ENCODE measurements at regions of chr1 and their contacts with region 1.

Region 1: DNA sequence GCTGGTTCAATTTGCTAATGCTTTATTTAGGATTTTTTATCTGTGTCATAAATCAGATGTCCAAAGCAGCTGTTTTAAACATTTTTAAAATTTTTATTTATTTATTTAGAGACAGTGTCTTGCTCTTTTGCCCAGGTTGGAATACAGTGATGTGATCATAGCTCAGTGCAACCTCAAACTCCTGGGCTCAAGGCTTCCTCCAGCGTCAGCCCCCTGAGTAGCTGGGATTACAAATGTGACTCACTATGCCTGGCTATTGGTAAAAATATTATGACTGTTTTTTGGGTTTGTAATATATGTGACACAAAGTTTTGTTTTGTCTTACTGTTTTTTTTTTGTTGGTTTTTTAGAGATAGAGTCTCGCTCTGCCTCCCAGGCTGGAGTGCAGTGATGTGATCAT is 11.8 kb downstream of the ZBED6 start:
- DNase-seq: no peak
- H3K4me3 ChIP-seq: no peak overlapping the region
- H3K27ac ChIP-seq: no peak overlapping the region
- H3K4me1 ChIP-seq: no peaks in the 10 kb centered on the region
- H3K27me3 ChIP-seq: no peaks in the 10 kb centered on the region
- CTCF ChIP-seq: no peak

Region 2: DNA sequence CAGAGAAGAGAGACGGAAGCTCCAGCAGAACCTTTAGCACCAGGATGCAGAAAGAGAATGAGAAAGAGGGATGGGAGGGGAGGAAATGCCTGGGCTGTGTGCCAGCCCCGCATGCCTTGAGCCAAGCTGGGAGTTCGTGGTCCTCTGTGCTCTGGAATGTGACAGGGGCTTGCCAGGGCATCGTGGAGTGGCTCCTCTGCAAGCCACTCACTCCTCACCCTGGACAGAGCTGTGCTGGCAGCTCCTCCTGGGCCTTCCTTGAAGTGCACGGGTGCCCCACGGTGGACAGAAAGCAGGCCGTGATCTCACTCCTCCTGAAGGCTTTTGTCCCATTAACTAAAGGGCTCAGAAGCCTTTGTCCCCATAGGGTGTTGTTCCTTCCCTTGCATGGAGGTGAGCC is 366.4 kb before region 1 on chr1:
- CTCF ChIA-PET with region 1: no interaction called
- POLR2A ChIA-PET with region 1: no interaction called
- intact Hi-C with region 1: no loop called
- DNase-seq: peak in 1 of 2 experiments; percentile 20
- H3K4me3 ChIP-seq: no peak overlapping the region
- H3K27ac ChIP-seq: no peak overlapping the region
- H3K4me1 ChIP-seq: no peaks in the 10 kb centered on the region
- H3K27me3 ChIP-seq: peaks cover 93% of the 10 kb centered on the region
- CTCF ChIP-seq: 0 out of 2 replicates have a peak, but pooled peaks have one; percentile 21

Region 3: GRCh38 chr1:203744075-203744972 is 62.9 kb before region 1 on chr1:
- CTCF ChIA-PET with region 1: no interaction called
- POLR2A ChIA-PET with region 1: interaction called, 13 read pairs
- intact Hi-C with region 1: no loop called
- DNase-seq: no peak
- H3K4me3 ChIP-seq: no peak overlapping the region
- H3K27ac ChIP-seq: no peak overlapping the region
- H3K4me1 ChIP-seq: no peaks in the 10 kb centered on the region
- H3K27me3 ChIP-seq: no peaks in the 10 kb centered on the region
- CTCF ChIP-seq: no peak

Region 4: DNA sequence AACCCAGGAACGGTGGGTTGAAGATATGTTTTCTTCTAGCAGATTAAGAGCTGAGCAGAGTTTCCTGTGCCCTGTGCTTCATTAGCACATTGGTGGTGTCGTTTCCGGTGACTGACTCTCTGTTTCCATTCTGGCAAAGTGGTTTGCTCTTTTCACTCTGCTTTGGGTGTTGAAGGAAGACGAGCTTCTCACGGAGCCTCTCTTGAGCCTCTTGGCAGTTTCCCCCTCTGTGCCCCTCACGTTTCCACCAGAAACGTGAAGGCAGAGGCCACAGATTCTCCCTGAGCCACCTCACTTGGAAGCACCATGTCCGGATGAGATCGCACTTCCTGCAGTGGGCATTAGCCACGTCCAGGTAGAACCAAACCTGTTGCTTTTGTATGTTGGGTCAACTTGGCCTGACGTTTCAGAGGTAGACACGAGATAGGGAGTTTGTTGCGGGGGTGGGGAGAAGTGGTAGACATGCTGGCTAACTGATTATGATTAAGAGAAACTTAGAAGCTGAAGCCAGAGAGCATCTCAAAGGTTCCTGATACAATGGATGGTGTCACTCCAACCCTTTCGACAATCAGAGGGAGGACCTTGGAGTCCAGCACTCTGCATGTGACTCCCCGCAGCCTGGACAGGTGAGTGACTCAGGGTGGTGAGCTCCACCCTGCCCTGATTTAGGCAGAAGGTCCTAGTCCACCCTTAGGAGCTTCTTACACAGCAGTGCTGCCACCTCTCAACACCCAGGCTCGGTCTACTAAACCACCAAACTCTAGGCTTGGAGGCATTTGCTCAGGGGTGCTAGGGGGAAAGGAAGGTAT is 42.0 kb before region 1 on chr1 and contains the start of gene LAX1:
- CTCF ChIA-PET with region 1: no interaction called
- POLR2A ChIA-PET with region 1: no interaction called
- intact Hi-C with region 1: no loop called
- DNase-seq: no peak
- H3K4me3 ChIP-seq: no peak within 1 kb of the TSS
- H3K27ac ChIP-seq: no peak within 1 kb of the TSS
- H3K4me1 ChIP-seq: peaks cover 8% of the 10 kb centered on the region
- H3K27me3 ChIP-seq: no peaks in the 10 kb centered on the region
- CTCF ChIP-seq: no peak
- total RNA-seq, gene LAX1: not detected in 2 replicates

Region 5: GRCh38 chr1:203795441-203796235 is 11.6 kb before region 1 on chr1 and contains the starts of genes ZBED6 and ZC3H11A:
- CTCF ChIA-PET with region 1: no interaction called
- POLR2A ChIA-PET with region 1: no interaction called
- intact Hi-C with region 1: no loop called
- DNase-seq: peak; percentile 96 to 98
- H3K4me3 ChIP-seq: peak within 1 kb of the TSS; percentile 70
- H3K27ac ChIP-seq: peak within 1 kb of the TSS; percentile 91
- H3K4me1 ChIP-seq: peaks cover 22% of the 10 kb centered on the region
- H3K27me3 ChIP-seq: no peaks in the 10 kb centered on the region
- CTCF ChIP-seq: no peak
- total RNA-seq, gene ZBED6: 22.7 and 32.7 TPM in 2 replicates
- total RNA-seq, gene ZC3H11A: 91.0 and 91.1 TPM in 2 replicates

Region 6: GRCh38 chr1:203944651-203945404 is 137.6 kb after region 1 on chr1:
- CTCF ChIA-PET with region 1: no interaction called
- POLR2A ChIA-PET with region 1: no interaction called
- intact Hi-C with region 1: no loop called
- DNase-seq: no peak
- H3K4me3 ChIP-seq: no peak overlapping the region
- H3K27ac ChIP-seq: no peak overlapping the region
- H3K4me1 ChIP-seq: no peaks in the 10 kb centered on the region
- H3K27me3 ChIP-seq: no peaks in the 10 kb centered on the region
- CTCF ChIP-seq: no peak